ENCODE measurements at regions of chr2 and their contacts with region 1.

Region 1: GRCh38 chr2:191114403-191114886 is 36.3 kb downstream of the STAT4 start:
- DNase-seq: peak; percentile 63
- ATAC-seq: peak; percentile 28
- H3K4me3 Mint-ChIP-seq: peak overlapping the region; percentile 65
- H3K27ac Mint-ChIP-seq: peak overlapping the region; percentile 98
- H3K4me1 Mint-ChIP-seq: peaks cover 83% of the 10 kb centered on the region
- H3K27me3 Mint-ChIP-seq: no peaks in the 10 kb centered on the region
- CTCF ChIP-seq: no peak

Region 2: GRCh38 chr2:191066197-191066918 is 48.1 kb before region 1 on chr2:
- CTCF ChIA-PET with region 1: interaction called, 11 read pairs
- POLR2A ChIA-PET with region 1: interaction called, 30 read pairs
- intact Hi-C with region 1: loop called (anchors 2 kb)
- DNase-seq: peak; percentile 24
- ATAC-seq: peak; percentile 40
- H3K4me3 Mint-ChIP-seq: peak overlapping the region; percentile 84
- H3K27ac Mint-ChIP-seq: peak overlapping the region; percentile 79
- H3K4me1 Mint-ChIP-seq: peaks cover 82% of the 10 kb centered on the region
- H3K27me3 Mint-ChIP-seq: no peaks in the 10 kb centered on the region
- CTCF ChIP-seq: no peak

Region 3: DNA sequence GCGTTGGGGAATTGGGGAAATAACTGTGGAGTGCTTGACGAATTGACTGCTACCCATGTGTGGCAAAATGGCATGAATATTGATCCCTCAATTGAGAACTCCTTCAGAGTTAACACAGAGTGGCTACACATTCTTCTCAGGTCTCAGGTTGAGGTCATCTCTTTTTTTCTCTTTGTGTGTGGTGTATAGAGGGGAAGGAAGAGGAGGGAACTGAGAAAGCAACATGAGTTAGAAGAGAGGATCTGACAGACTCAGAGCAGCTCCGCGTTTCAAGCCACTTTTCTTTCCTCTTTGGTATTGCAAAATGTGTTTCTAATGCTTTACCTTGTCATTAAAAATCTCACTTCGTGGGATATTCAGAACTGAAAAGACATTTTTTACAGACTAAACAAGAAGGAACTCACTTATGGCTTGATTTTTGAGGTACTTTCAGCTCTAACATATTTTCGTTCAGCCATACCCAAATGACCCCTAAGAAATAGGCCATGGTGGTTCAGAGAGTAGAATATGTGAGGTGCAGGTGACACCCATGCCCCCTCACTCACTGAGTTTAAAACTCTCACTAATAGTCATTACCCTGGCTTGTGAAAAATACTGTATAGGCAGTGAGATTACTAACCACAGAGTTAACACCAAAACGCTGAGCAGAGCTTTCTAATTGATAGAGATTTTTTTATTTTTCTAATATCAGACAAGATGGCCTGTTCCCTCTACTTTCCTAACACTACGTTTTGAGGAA is 13.9 kb after region 1 on chr2:
- CTCF ChIA-PET with region 1: interaction called, 7 read pairs
- POLR2A ChIA-PET with region 1: interaction called, 8 read pairs
- intact Hi-C with region 1: loop called (anchors 1 kb)
- DNase-seq: no peak
- ATAC-seq: peak; percentile 84
- H3K4me3 Mint-ChIP-seq: peak overlapping the region; percentile 65
- H3K27ac Mint-ChIP-seq: peak overlapping the region; percentile 82
- H3K4me1 Mint-ChIP-seq: peaks cover 72% of the 10 kb centered on the region
- H3K27me3 Mint-ChIP-seq: no peaks in the 10 kb centered on the region
- CTCF ChIP-seq: no peak

Region 4: GRCh38 chr2:191333911-191334357 is 219.5 kb after region 1 on chr2:
- CTCF ChIA-PET with region 1: no interaction called
- POLR2A ChIA-PET with region 1: no interaction called
- intact Hi-C with region 1: no loop called
- DNase-seq: no peak
- ATAC-seq: no peak
- H3K4me3 Mint-ChIP-seq: no peak overlapping the region
- H3K27ac Mint-ChIP-seq: no peak overlapping the region
- H3K4me1 Mint-ChIP-seq: no peaks in the 10 kb centered on the region
- H3K27me3 Mint-ChIP-seq: no peaks in the 10 kb centered on the region
- CTCF ChIP-seq: no peak

Measured in activated CD8-positive, alpha-beta T cell treated with anti-CD3 and anti-CD28 coated beads for 36 hours (primary cell).